Mammary epithelial cell (primary cell): ENCODE measurements at regions of chr1 and their contacts with region 1.

Region 1: GRCh38 chr1:116565222-116565621 is 5.6 kb downstream of the CD58 start:
- DNase-seq: no peak
- H3K4me3 ChIP-seq: no peak overlapping the region
- H3K27ac ChIP-seq: no peak overlapping the region
- H3K4me1 ChIP-seq: peaks cover 12% of the 10 kb centered on the region
- H3K27me3 ChIP-seq: no peaks in the 10 kb centered on the region
- CTCF ChIP-seq: no peak

Region 2: GRCh38 chr1:116418091-116418830 is 147.0 kb before region 1 on chr1:
- CTCF ChIA-PET with region 1: no interaction called
- dilution Hi-C with region 1: no loop called
- in situ Hi-C with region 1: no loop called
- intact Hi-C with region 1: no loop called
- DNase-seq: peak; percentile 77
- H3K4me3 ChIP-seq: peak overlapping the region; percentile 62 to 83 (median 71)
- H3K27ac ChIP-seq: peak overlapping the region; percentile 74
- H3K4me1 ChIP-seq: peaks cover 14% of the 10 kb centered on the region
- H3K27me3 ChIP-seq: no peaks in the 10 kb centered on the region
- CTCF ChIP-seq: no peak

Region 3: DNA sequence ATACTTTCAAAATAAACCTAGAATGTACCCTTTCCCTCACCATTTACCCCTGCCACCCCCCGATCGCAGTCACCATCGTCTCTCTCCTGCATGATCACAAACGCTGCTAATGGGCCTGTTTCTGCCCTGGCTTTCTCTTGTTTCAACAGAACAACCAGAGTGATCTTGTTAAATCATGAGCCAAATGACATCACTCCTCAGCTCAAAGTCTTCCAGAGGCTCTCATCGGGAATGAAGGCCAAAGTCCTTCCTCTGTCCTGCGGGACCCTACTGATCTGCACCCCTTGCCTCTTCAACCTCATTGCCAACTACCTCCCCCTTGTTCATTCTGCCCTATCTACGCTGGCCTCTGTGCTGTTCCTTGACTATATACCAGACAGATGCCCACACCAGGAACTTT is 305.1 kb after region 1 on chr1:
- CTCF ChIA-PET with region 1: interaction called, 19 read pairs
- dilution Hi-C with region 1: no loop called
- in situ Hi-C with region 1: no loop called
- intact Hi-C with region 1: no loop called
- DNase-seq: no peak
- H3K4me3 ChIP-seq: no peak overlapping the region
- H3K27ac ChIP-seq: no peak overlapping the region
- H3K4me1 ChIP-seq: peaks cover 20% of the 10 kb centered on the region
- H3K27me3 ChIP-seq: no peaks in the 10 kb centered on the region
- CTCF ChIP-seq: no peak